ENCODE measurements at regions of chr17 and their contacts with region 1.

Region 1: DNA sequence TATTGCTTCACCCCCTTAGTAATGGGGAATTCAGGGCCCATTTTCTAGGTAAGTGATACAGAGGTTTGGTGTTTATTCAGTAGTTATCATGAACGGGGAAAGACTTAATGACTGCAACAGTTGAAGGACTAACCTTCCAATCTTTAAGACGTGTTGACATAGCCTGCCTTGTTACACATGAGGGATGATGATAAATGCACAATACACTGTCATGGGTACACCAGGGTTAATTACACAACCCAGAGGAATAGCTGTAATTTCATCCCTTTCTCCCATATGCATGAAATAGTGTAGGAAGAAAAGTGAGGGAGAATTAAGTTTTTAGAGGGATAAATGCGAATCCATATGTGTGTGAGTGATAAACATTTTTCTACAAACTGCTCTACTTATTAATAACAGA is 10.7 kb downstream of the MYH4 start:
- DNase-seq: no peak
- ATAC-seq: no peak
- H3K4me3 ChIP-seq: no peak overlapping the region
- H3K27ac ChIP-seq: no peak overlapping the region
- H3K4me1 ChIP-seq: no peaks in the 10 kb centered on the region
- H3K27me3 ChIP-seq: peaks cover 44% of the 10 kb centered on the region
- CTCF ChIP-seq: no peak
- POLR2A ChIP-seq: no peak
- RAD21 ChIP-seq: no peak

Region 2: DNA sequence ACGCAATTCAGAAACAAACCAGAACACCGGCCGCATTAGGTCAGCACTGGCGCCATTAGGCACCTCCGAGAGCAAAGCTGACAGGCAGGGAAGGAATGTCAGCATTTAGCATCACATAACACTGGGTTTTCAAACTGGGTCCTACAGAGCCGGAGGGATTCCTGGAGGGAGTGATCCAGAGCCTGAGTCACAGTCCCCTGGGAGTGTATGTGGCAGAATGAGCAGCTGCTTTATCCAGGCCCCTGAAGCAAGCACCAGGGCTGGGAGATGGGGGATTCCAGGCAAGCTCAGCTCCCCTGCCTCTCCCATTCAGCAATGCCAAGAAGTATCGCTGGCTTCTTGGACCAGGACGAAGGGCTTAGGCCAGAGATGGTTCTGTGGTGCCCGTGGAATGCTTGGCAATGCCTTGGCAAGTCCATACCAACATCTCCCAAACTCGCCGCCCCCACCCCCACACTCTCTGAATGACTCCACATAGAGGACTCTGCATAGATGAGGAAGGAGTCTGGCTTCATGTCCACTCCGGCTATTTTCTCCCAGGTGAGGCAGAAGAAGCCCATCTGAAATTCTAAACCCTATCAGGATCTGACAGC is 280.7 kb before region 1 on chr17:
- CTCF ChIA-PET with region 1: no interaction called
- POLR2A ChIA-PET with region 1: no interaction called
- RAD21 ChIA-PET with region 1: no interaction called
- intact Hi-C with region 1: no loop called
- DNase-seq: no peak
- ATAC-seq: no peak
- H3K4me3 ChIP-seq: no peak overlapping the region
- H3K27ac ChIP-seq: no peak overlapping the region
- H3K4me1 ChIP-seq: no peaks in the 10 kb centered on the region
- H3K27me3 ChIP-seq: no peaks in the 10 kb centered on the region
- CTCF ChIP-seq: no peak
- POLR2A ChIP-seq: no peak
- RAD21 ChIP-seq: no peak

Region 3: DNA sequence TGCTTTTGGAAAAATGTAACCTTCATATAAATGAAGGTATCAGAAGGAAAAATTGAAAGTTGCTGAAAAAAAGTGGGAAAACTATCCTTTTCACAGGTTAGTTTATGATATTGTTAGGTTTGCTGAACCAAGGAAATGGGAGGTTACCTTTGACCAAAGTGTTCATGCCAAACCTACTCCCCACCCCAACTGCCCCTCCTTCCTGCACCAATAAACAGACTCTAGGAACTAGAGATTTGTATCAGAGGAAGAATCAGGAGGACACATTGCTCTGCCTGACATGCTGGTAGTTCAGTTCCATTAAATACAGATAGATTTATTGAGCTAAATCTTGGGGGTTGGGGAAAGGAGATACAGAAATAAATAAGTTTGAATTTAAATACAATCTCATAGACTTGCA is 55.1 kb before region 1 on chr17:
- CTCF ChIA-PET with region 1: no interaction called
- POLR2A ChIA-PET with region 1: no interaction called
- RAD21 ChIA-PET with region 1: no interaction called
- intact Hi-C with region 1: loop called (anchors 5 kb)
- DNase-seq: no peak
- ATAC-seq: no peak
- H3K4me3 ChIP-seq: no peak overlapping the region
- H3K27ac ChIP-seq: no peak overlapping the region
- H3K4me1 ChIP-seq: no peaks in the 10 kb centered on the region
- H3K27me3 ChIP-seq: no peaks in the 10 kb centered on the region; the same call in 1 of the 2 replicates
- CTCF ChIP-seq: no peak
- POLR2A ChIP-seq: no peak
- RAD21 ChIP-seq: no peak

Region 4: GRCh38 chr17:10429421-10430045 is 29.2 kb before region 1 on chr17:
- CTCF ChIA-PET with region 1: no interaction called
- POLR2A ChIA-PET with region 1: no interaction called
- RAD21 ChIA-PET with region 1: no interaction called
- intact Hi-C with region 1: no loop called
- DNase-seq: no peak
- ATAC-seq: no peak
- H3K4me3 ChIP-seq: no peak overlapping the region
- H3K27ac ChIP-seq: no peak overlapping the region
- H3K4me1 ChIP-seq: no peaks in the 10 kb centered on the region
- H3K27me3 ChIP-seq: peaks cover 10% of the 10 kb centered on the region
- CTCF ChIP-seq: no peak
- POLR2A ChIP-seq: no peak
- RAD21 ChIP-seq: no peak

Region 5: DNA sequence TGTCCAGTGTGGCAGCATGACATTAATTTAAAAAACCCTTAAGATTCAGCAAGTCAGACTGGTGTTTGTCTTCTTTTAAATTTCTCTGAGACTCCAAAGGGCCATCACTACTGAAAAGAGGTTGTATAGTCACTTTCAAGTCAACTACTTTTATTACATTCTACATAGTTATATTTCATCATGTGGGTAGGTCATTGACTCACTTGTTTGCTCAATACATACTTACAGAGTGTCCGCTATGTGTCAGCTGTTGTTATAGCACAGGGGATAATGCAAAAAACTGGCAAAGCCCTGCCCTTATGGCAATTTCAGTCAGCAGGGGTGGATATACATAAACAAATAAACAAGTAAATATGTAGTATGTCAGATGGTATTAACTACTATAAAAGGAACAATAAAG is 13.2 kb after region 1 on chr17:
- CTCF ChIA-PET with region 1: no interaction called
- POLR2A ChIA-PET with region 1: no interaction called
- RAD21 ChIA-PET with region 1: no interaction called
- intact Hi-C with region 1: no loop called
- DNase-seq: no peak
- ATAC-seq: no peak
- H3K4me3 ChIP-seq: no peak overlapping the region
- H3K27ac ChIP-seq: no peak overlapping the region
- H3K4me1 ChIP-seq: no peaks in the 10 kb centered on the region
- H3K27me3 ChIP-seq: peaks cover 38% of the 10 kb centered on the region
- CTCF ChIP-seq: no peak
- POLR2A ChIP-seq: no peak
- RAD21 ChIP-seq: no peak

Region 6: DNA sequence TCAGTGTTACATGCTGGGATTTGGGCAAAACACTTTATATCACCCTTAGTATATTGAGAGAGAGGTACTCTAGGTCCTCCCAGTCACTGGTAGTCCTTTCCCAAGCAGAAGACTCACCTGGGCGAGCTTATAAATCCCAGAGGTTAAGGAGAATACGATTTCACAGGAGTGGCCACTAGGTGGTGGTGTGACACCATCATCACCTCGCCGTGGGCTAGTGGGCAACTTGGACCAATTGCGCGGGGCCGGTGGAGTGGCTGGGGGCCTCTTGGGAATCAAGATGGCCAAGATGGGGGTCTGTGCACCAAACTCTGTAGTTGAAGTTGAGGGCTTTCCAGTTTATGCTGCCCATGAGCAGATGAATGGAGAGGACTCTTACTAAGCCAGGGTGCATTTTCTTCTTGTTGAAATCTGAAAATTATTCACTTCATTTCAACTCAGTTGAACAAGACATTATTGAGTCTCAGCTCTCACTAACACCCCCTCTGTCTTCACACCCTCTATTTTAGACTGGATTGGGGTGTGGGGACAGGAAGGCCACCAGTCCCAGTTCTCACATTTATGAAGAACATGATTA is 417.4 kb after region 1 on chr17:
- CTCF ChIA-PET with region 1: no interaction called
- POLR2A ChIA-PET with region 1: no interaction called
- RAD21 ChIA-PET with region 1: no interaction called
- intact Hi-C with region 1: no loop called
- DNase-seq: peak; percentile 36
- ATAC-seq: peak; percentile 89
- H3K4me3 ChIP-seq: no peak overlapping the region
- H3K27ac ChIP-seq: no peak overlapping the region
- H3K4me1 ChIP-seq: no peaks in the 10 kb centered on the region
- H3K27me3 ChIP-seq: peaks cover 5% of the 10 kb centered on the region; the same call in 1 of the 2 replicates
- CTCF ChIP-seq: peak; percentile 43 to 75 (median 49); a peak in 5 of 6 replicates
- POLR2A ChIP-seq: no peak
- RAD21 ChIP-seq: peak; percentile 74

Measured in HCT116 (cell line).